ENCODE measurements at regions of chr10 and their contacts with region 1.

Region 1: GRCh38 chr10:12068449-12069269 is at the start of gene DHTKD1:
- DNase-seq: peak; percentile 99
- ATAC-seq: peak; percentile 99 to 100 (median 99)
- H3K4me3 ChIP-seq: peak within 1 kb of the TSS; percentile 74
- H3K27ac ChIP-seq: peak within 1 kb of the TSS; percentile 91
- H3K4me1 ChIP-seq: peaks cover 10% of the 10 kb centered on the region
- H3K27me3 ChIP-seq: no peaks in the 10 kb centered on the region
- CTCF ChIP-seq: peak; percentile 51
- total RNA-seq, gene DHTKD1: 14.1 to 31.7 (median 20.0) TPM

Region 2: DNA sequence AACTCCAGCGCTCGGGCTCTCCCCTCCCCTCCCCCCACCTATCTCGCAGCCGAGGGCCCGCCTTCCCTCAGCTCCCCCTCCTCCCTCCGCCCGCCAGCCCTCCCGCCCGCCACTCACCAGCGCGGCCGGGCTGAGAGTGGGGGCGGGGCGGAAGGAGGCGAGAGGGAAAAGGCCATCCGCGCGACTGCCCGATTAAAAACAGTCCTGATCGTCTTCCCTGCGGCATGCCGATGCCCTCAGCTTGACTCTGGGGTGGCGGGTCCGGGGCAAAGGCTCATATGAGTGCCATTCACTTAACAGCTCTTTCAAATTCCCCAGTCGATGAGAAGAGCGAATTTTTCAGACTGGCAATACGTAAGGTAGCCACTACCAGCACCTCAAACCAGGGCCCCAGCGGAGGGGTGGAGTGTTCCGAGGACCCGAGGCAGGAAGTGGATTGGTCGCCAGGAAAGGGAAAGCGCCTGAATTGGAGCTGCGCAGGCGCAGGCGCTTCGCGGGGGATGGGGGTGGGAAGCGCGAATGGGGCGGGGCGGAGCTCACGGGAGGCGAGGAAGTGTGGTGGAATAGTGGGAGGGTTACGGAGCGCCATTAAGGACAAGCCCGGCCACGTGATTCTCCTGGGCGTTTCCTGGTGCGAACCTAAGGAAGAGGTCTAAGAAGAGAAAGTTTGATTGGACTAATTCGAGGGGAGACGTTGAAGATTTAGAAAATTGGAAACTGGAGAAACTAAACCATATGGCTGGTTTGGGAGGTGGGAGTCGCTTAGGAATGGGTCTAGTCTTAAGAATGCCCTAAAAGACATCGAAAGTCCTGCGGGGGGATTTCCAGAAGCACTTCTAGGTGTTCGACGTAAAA is 25.6 kb before region 1 on chr10 and contains the start of gene UPF2:
- intact Hi-C with region 1: loop called in 1 of 2 experiments (anchors 1 kb)
- DNase-seq: peak; percentile 98 to 99
- ATAC-seq: peak; percentile 96 to 97 (median 96)
- H3K4me3 ChIP-seq: peak within 1 kb of the TSS; percentile 99
- H3K27ac ChIP-seq: peak within 1 kb of the TSS; percentile 96
- H3K4me1 ChIP-seq: peaks cover 12% of the 10 kb centered on the region
- H3K27me3 ChIP-seq: peaks cover 0 to 3% (median 0%) of the 10 kb centered on the region in 3 donors
- CTCF ChIP-seq: no peak
- total RNA-seq, gene UPF2: 18.9 to 35.1 (median 24.5) TPM

Region 3: GRCh38 chr10:12129222-12130111 is 60.8 kb after region 1 on chr10 and contains the start of gene SEC61A2:
- intact Hi-C with region 1: loop called in 1 of 2 experiments (anchors 5 kb)
- DNase-seq: peak; percentile 96 to 97
- ATAC-seq: peak; percentile 99 to 100 (median 99)
- H3K4me3 ChIP-seq: peak within 1 kb of the TSS; percentile 91
- H3K27ac ChIP-seq: peak within 1 kb of the TSS; percentile 75
- H3K4me1 ChIP-seq: peaks cover 5% of the 10 kb centered on the region
- H3K27me3 ChIP-seq: no peaks in the 10 kb centered on the region
- CTCF ChIP-seq: no peak
- total RNA-seq, gene SEC61A2: 6.9 to 9.8 (median 8.5) TPM

Region 4: DNA sequence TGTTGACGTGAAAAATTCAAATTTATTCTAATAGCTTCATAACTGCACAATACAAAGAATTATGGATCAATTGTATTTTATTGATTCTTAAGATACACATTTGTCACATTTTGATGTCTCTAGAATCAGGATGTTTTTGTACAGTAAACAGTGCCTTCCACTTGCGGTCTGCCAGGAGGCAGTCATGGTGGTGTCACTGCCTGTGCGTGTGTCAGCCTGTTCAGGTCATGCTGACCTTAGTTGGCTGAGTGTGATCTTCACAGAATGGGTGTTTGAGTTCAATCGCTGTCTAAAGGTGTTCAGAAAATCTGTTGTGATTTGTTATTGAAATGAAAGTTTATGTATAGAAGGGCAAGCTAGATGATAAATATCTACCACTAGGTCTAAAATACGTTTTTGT is 81.5 kb after region 1 on chr10:
- intact Hi-C with region 1: no loop called
- DNase-seq: no peak
- ATAC-seq: no peak
- H3K4me3 ChIP-seq: no peak overlapping the region
- H3K27ac ChIP-seq: no peak overlapping the region
- H3K4me1 ChIP-seq: no peaks in the 10 kb centered on the region
- H3K27me3 ChIP-seq: no peaks in the 10 kb centered on the region
- CTCF ChIP-seq: no peak

Measured in psoas muscle (tissue), 8 donors.